Right ventricle myocardium superior (tissue), 1 donor: ENCODE measurements at regions of chr9 and their contacts with region 1.

Region 1: DNA sequence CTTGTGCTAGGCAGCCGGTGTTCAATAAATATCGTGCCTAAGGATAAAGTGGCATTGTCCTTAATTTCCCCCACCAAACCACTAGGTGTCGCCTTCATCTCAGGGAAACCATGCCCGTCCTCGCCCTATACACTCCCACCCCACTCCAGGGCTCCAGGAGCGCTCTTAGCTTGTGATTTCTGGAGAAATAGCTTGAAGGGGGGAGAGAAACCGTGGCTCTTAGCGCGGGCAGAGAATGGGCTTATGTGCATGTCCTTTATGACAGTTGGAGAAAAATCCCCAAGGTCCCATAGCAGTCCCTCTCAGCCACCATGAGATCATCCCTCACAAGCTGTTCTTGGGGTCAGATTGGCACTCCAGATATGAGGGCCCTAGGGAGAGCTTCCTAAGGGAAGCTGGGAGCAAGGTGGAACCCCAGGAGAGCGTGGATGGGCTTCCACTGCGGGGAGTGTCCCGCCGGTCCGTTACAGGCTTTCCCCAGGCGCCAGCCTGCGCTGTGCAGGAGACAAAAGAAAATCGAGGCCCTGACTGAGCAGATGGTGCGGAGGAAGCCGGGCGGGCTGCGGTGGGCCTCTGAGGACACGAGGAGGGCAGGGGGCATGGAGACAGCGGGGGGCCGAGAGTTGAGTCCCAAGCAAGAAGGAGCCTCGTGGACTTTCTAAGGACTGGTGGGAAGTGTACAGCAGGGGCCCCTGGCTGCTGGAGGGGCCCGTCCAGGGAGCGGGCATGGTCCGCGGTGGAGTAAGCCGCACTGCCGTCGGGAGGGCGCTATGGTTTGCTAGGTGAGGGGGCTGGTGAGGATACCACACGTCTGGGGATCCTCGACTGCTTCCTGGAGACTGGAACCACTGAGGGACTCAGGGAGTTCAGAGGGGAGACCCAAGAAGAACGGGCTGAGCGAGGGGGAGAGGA is 750 bp upstream of the NPR2 start:
- DNase-seq: peak; percentile 74
- ATAC-seq: peak; percentile 88

Region 2: DNA sequence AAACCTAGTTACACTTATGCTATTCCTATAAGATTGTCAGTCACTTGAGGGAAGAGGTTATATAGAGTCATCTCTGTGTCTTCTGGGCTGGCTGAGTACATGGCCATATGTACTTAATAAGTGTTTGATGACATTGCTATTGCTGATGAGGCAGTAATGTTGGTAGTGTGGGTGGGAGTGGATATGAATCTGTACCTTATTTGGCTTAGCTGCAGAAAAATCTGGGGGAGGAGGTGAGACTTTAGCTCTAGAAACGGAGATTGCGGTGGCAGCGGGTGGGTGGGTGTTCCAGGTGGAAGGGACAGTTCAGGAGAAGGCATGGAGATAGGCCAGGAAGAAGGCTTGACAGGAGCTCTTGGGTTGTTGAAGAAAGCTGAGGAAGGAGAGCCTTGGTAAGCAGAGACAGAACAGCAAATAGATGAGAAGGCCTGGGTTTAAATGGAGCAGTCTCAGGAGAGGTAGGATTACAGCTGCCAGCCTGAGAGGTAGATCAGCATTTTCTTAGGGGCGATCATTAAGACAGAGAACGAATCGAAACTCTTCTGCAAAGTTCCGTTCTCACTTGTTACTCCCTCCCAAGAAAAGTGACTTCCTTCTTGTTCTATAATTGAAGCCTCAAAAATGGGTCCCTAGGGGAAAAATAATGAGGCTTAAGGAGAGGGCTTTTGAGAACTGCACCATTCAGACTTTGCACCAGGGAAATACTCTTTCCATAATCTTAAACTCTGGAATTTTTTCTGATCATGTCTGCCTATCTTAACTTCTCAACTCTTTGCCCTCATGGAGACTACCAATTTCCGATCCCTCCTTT is 468.4 kb before region 1 on chr9:
- intact Hi-C with region 1: no loop called
- DNase-seq: no peak
- ATAC-seq: no peak

Region 3: GRCh38 chr9:35657546-35658136 is 133.0 kb before region 1 on chr9 and contains the start of gene RMRP:
- intact Hi-C with region 1: no loop called
- DNase-seq: peak; percentile 98
- ATAC-seq: peak; percentile 94
- total RNA-seq, gene RMRP: 19,155 TPM

Region 4: GRCh38 chr9:35829084-35829763 is 38.6 kb after region 1 on chr9 and contains the start of gene TMEM8B:
- intact Hi-C with region 1: loop called (anchors 5 kb)
- DNase-seq: peak; percentile 99
- ATAC-seq: peak; percentile 93
- total RNA-seq, gene TMEM8B: 13.3 TPM

Region 5: DNA sequence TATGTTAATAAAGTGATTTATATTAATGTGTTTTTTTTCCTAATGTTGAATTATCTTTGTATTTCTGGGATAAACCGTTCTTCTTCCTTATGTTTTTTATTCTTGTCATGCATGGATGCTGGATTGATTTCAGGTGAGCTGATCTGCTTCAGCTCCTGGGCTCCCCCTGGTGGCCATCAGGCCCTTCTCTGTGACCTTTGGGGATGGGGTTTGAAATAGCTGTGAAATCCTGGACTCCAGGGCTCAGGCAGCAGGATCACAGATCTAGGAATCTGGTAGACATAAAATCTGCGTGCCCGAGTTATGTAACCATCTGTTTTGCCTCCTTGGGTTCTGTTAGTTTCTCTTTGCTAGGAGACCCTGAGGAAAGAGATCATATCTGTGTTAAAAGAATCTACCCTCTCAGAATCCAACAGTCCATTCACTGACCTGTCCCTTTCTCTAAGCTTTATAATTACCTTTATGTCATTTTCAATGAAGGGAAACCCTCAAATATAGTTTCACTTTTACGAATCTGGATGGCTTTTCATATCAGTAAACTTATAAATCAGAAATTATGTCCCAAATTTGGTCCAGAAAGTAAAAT is 91.7 kb after region 1 on chr9:
- intact Hi-C with region 1: loop called (anchors 2 kb)
- DNase-seq: peak; percentile 91
- ATAC-seq: peak; percentile 95

Region 6: DNA sequence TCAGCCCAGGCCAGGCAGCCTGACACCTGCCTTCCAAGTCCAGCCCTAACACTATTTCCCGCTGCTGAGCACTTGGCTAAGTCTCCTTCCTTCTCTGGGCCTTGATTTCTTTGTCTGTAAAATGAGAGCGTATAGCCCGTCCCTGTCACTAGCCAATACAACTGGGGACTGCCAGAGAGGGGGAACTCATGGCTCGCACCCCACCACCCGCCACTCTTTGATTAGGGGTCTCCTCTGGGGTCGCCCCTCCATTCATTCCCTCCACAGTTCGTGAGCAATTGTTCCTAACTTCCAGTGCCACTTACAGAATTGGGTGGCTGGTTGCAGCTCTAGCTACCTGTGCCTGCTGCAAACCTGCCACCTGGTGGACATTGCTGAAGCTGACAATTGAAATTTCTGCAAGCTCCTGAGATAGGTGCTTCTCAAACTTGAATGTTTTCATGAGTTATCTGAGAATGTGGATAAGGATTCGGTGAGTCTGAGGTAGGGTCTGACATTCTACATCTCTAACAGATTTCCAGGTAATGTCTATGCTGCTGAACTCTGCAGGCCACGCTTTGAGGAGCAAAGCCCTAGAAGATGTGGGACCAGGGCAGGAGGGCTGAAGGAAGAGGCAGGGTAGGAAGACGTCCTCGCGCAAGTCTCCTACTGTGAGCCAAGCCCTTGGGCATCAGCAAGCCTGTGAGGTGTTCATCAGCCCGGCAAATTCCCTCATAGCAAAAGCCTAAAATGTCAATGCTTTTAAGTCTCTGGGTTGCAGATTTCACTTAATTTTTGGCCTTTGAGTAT is 232.8 kb after region 1 on chr9:
- intact Hi-C with region 1: loop called (anchors 10 kb)
- DNase-seq: peak; percentile 50
- ATAC-seq: peak; percentile 74